ENCODE measurements at regions of chr9 and their contacts with region 1.

Region 1: DNA sequence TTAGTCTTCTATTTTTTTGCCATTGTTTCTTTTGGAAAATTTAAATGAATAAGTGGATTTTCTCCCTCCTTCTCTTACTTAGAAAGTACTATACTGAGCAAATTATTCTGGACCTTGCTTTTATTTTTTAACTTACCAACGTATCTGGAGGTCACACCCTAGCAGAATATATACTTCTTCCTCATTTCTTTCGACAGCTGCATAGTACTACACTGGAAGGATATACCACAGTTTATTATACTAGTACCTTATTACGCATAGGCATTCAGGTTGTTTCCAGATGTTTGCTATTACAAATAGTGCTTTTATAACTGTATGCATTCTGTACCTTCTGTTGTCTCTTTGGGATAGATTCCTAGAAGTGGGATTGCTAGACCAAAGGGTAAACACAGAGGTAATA is 16.7 kb downstream of the RC3H2 start:
- H3K4me3 ChIP-seq: no peak overlapping the region
- H3K27ac ChIP-seq: no peak overlapping the region
- H3K4me1 ChIP-seq: no peaks in the 10 kb centered on the region
- CTCF ChIP-seq: no peak

Region 2: DNA sequence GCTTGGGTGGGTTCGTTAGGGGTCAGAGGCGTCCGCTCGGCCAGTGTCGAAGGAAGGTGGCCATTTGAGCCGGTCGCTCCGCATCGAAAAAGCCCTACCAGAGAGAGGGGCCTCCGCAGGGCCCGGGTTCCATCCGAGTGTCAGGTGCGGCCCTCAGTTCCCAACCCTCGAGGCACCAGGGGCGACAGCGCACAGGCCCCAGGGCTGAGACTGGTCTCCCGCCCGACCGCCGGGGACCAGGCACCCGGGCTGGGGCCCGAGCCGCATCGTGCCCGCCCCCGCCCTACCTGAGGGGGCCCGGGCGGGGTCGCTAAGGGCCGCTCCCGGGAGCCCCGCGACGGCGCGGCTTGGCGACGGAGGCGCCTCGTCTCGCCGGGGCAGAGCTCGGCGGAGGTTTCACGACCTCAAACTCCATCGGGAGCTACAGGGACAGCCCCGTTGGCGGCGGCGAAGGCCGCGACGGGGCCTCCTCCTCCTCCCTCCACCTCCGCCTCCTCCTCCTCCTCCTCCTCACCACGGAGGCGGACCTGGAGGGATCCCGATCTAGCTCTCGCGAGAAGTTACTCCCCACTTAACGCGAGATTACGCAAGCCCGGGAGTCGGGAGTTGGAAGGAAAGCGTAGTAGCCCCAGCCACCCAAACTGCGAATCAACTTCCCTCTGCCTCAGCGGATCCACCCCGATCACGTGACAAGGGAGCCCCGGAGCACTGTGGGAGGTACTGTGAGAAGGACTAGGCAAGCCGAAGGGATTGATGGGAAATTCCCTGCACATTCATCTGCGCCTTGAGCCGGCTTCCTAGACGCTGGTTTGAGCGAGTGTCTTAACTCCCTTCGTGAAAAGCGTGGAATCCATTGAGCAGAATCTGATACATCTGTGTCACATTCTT is 16.6 kb after region 1 on chr9 and contains the start of gene RC3H2:
- CTCF ChIA-PET with region 1: interaction called, 3 read pairs
- POLR2A ChIA-PET with region 1: interaction called, 11 read pairs
- H3K4me3 ChIP-seq: peak within 1 kb of the TSS; percentile 94
- H3K27ac ChIP-seq: peak within 1 kb of the TSS; percentile 81
- H3K4me1 ChIP-seq: 0 out of 2 replicates have a peak, but pooled peaks cover 3% of the 10 kb centered on the region
- CTCF ChIP-seq: no peak

Region 3: DNA sequence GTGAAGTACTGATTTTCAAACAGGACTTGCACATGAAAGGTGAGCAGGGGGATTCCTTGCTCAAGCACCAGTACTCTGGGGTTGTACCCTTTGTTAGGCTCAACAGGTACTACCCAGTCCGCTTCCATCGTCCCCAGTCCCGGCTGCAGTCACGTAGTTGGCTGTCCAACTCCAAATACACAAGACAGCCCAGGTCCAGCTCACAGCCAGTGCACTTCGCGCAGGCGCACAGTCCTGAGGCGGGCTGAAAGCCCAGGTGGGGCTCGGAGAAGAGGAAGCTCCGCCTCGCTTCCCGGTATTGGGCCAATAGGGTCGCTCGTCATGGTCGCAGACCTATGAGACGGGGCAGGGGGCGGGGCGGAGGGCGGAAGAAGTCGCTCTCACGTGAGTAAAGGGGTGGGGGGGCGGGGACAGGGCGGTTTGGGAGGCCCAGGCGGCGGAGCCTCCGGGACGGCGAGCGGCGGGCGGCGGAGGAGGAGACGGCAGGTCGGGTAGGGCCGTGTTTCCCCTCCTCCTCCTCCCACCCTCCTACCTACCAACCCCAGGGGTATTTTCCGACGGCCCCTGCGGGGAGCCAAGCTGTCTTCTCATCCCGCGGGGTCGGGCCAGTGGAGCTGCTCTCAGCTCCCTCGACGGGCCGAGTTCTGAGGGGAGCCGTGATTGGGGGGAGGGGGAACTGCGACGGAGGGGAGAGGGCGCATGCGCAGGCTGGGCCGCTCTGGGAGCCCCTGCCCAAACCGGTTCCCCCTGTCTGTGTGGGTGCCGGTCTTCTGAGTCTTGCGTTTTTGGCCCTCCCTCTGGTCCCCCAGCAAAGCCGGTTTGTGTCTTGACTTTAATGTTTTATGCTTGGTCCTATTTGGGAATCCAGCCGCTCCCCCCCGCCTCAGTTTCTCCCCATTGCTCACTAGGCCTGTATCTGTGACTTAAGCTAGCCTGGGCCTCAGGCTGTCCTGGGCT is 52.4 kb after region 1 on chr9 and contains the start of gene RABGAP1:
- CTCF ChIA-PET with region 1: no interaction called
- POLR2A ChIA-PET with region 1: no interaction called
- H3K4me3 ChIP-seq: peak within 1 kb of the TSS; percentile 89
- H3K27ac ChIP-seq: peak within 1 kb of the TSS; percentile 58
- H3K4me1 ChIP-seq: no peaks in the 10 kb centered on the region
- CTCF ChIP-seq: no peak